ENCODE measurements at regions of chr9 and their contacts with region 1.

Region 1: GRCh38 chr9:71249729-71250317 is 128.4 kb upstream of the TRPM3 start:
- DNase-seq: no peak
- ATAC-seq: peak; percentile 78

Region 2: DNA sequence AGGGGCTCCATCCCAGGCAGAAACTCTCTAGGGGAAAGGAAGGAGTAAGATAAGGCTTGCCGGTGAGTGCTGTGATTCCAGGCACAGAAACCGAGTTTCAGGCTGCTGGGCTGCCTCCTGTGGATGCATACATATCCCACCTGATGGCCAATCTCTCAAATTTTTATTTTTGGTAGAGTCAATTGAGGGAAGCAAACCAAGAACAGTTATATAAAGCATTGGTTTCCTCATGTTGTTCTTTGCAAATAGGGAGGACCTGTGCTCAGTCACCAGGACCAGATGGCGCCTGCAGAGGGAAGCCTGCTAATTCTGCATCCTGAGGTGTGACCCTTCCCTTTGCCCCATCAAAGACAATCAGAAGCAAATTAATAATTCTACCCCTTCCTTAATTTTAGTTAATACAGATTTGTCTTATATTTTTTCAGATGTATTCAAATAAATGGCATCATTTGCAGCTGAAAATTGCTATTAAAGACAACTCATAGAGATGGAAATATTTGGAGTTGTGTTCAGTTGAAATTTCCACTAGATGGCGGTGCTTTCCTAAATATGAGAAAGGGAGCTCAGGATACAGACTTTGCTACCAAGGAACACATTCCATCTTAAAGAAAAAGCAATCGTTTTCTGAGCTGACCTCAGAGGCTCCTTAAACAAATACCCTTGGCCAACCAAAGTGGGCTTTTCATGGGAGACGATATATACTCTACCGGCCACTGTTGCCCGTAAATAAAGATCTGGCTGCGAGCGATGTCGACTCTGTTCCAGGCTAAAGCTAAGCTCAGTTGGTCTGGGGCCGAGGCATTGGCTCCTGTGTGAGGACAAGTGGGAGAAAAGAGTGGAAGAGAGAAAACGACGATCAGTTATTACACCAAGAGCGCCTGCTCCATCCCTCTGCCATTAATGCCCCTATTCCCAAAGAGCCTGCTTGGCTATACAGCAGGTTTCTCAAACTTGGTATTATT is 609.7 kb before region 1 on chr9:
- intact Hi-C with region 1: loop called (anchors 5 to 10 kb)
- DNase-seq: no peak
- ATAC-seq: peak; percentile 46

Region 3: DNA sequence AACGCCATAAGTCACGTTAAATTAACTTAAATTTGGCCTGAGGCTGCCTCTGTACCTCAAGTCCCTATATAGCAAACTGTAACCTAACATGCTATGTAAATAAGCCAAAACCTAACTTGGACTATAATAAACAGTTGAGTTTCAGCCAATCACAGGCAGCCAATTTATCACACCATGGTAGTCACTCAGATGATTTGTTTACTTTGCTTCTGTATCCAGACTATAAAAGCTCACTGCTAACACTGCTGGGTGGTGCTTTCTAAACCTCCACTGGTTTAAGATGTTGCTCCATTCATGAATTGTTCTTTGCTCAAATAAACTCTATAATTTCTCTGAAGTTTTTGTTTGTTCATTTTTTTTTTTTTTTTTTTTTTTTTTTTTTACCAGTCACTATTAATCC is 191.2 kb before region 1 on chr9:
- intact Hi-C with region 1: no loop called
- DNase-seq: peak in 1 of 2 donors; percentile 28
- ATAC-seq: peak; percentile 99

Region 4: GRCh38 chr9:71179183-71179582 is 70.6 kb before region 1 on chr9:
- intact Hi-C with region 1: no loop called
- DNase-seq: peak in 1 of 2 donors; percentile 7
- ATAC-seq: peak; percentile 84

Region 5: GRCh38 chr9:71306134-71306533 is 56.3 kb after region 1 on chr9:
- intact Hi-C with region 1: no loop called
- DNase-seq: no peak
- ATAC-seq: no peak